ENCODE measurements at regions of chr4 and their contacts with region 1.

Region 1: GRCh38 chr4:87209696-87210095 is 10.7 kb downstream of the KLHL8 start:
- DNase-seq: no peak
- ATAC-seq: peak; percentile 92
- H3K4me3 Mint-ChIP-seq: peak overlapping the region; percentile 77
- H3K27ac Mint-ChIP-seq: peak overlapping the region; percentile 78
- H3K4me1 Mint-ChIP-seq: peaks cover 14% of the 10 kb centered on the region
- H3K27me3 Mint-ChIP-seq: no peaks in the 10 kb centered on the region

Region 2: GRCh38 chr4:87220094-87220822 is 10.6 kb after region 1 on chr4 and contains the start of gene KLHL8:
- POLR2A ChIA-PET with region 1: interaction called, 21 read pairs
- DNase-seq: peak; percentile 95
- ATAC-seq: peak; percentile 91
- H3K4me3 Mint-ChIP-seq: peak within 1 kb of the TSS; percentile 88
- H3K27ac Mint-ChIP-seq: peak within 1 kb of the TSS; percentile 93
- H3K4me1 Mint-ChIP-seq: peaks cover 10% of the 10 kb centered on the region
- H3K27me3 Mint-ChIP-seq: peaks cover 3% of the 10 kb centered on the region
- total RNA-seq, gene KLHL8: 12.6 to 13.7 TPM

Measured in activated naive CD8-positive, alpha-beta T cell treated with anti-CD3 and anti-CD28 coated beads, Interleukin-2, amount 10 ng/mL, durations not matched to agents 7 days and 5 days (primary cell).